ENCODE measurements at regions of chr9 and their contacts with region 1.

Region 1: DNA sequence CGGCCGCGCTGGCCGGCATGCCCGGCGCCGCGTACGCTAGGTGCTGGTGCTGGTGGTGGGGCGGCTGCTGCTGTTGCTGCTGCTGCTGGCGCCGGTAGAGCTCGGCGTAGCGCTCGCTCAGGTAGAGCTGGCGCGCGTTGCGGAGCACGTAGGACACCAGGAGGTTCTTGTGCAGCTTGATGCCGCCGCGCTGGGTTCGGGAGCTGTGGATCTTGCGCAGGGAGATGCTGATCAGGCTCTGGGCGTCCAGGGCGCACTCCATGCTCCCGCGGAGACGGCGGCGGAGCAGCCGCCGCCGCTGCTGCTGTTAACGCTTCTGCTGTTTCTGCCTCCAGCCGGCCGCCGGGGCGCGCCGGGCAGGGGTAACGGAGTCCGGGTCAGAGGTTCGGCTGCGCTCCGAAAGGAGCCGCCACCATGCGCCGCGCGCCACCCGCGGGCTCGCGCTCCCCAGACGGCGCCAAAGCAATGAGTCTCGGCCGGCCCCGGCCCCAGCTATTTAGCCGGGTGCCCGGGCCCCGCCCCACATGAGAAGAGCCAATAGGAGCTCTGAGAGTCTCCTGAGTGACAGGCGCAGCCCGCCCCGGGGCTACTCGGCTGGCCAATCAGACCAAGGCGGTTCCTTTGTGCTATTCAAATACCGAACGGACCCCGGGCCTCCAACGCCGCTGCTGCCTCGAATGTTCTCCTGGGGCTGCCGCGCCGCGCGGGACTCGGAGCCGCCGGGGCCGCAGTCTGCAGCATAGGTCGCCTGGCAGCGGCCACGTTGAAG is at the start of gene IER5L:
- DNase-seq: no peak
- ATAC-seq: peak; percentile 91
- H3K4me3 ChIP-seq: peak within 1 kb of the TSS; percentile 81
- H3K27ac ChIP-seq: no peak within 1 kb of the TSS
- H3K4me1 ChIP-seq: peaks cover 21% of the 10 kb centered on the region
- H3K27me3 ChIP-seq: peaks cover 0 to 3% of the 10 kb centered on the region in 2 experiments; a peak in 2 of 4 replicates
- CTCF ChIP-seq: no peak
- EP300 ChIP-seq: no peak
- POLR2A ChIP-seq: peak; percentile 96
- RAD21 ChIP-seq: no peak
- polyA plus RNA-seq, gene IER5L: 0.08 to 0.13 TPM

Region 2: DNA sequence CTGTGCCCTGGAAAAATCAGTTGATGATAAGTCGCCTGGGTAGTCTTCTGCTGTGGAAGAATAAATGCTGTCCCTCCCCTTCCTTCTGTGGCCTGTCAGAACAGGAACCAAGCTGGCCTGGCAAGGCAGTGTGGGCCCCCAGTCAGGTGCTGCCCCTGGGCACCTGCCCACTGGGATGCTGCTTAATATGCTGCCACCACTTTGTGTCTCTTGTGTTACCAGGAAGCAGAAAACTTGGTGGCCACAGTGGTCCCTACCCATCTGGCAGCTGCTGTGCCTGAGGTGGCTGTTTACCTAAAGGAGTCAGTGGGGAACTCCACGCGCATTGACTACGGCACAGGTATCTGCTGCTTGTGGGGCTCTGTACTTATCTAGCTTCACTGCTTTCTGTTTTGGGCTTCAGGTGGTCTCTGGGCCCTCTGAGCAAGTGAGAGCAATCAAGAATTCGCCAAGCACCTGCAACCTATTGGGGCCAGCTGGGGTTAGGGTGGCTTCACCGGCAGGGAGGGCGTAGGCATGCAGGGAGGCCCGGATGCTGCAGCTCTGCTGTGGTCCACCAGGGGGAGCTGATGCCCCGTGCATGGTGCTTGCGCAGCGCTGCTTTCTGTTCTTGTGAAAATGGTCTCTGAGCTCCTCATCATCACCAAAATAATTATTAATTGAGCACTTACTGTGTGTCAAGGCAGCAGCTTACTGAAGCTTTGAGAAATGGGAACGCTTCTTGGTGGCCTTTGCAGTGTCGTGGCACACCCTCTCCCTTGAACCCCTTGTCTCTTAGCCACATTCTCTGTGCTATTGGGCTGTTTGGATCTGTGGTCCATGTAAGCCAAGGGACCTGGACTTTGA is 46.5 kb before region 1 on chr9:
- CTCF ChIA-PET with region 1: interaction called, 70 read pairs
- POLR2A ChIA-PET with region 1: no interaction called
- RAD21 ChIA-PET with region 1: interaction called, 14 read pairs
- SMC1A ChIA-PET with region 1: interaction called, 6 read pairs
- in situ Hi-C with region 1: no loop called
- intact Hi-C with region 1: no loop called
- DNase-seq: no peak
- ATAC-seq: peak; percentile 100
- H3K4me3 ChIP-seq: no peak overlapping the region
- H3K27ac ChIP-seq: no peak overlapping the region; the same call in 1 of the 2 replicates
- H3K4me1 ChIP-seq: no peaks in the 10 kb centered on the region
- H3K27me3 ChIP-seq: no peaks in the 10 kb centered on the region
- CTCF ChIP-seq: peak; percentile 98 to 99 (median 98); a peak in 5 of 6 replicates
- EP300 ChIP-seq: no peak
- POLR2A ChIP-seq: no peak
- RAD21 ChIP-seq: peak; percentile 83

Region 3: GRCh38 chr9:129166623-129167557 is 11.1 kb before region 1 on chr9:
- CTCF ChIA-PET with region 1: interaction called, 11 read pairs
- POLR2A ChIA-PET with region 1: no interaction called
- RAD21 ChIA-PET with region 1: interaction called, 3 read pairs
- SMC1A ChIA-PET with region 1: interaction called, 4 read pairs
- in situ Hi-C with region 1: no loop called
- intact Hi-C with region 1: no loop called
- DNase-seq: no peak
- ATAC-seq: peak; percentile 38
- H3K4me3 ChIP-seq: no peak overlapping the region
- H3K27ac ChIP-seq: no peak overlapping the region
- H3K4me1 ChIP-seq: peaks cover 6% of the 10 kb centered on the region; the same call in 1 of the 2 replicates
- H3K27me3 ChIP-seq: no peaks in the 10 kb centered on the region
- CTCF ChIP-seq: no peak
- EP300 ChIP-seq: no peak
- POLR2A ChIP-seq: no peak
- RAD21 ChIP-seq: no peak

Region 4: GRCh38 chr9:129270903-129271431 is 93.0 kb after region 1 on chr9:
- CTCF ChIA-PET with region 1: interaction called, 9 read pairs
- POLR2A ChIA-PET with region 1: interaction called, 3 read pairs
- RAD21 ChIA-PET with region 1: no interaction called
- SMC1A ChIA-PET with region 1: no interaction called
- in situ Hi-C with region 1: no loop called
- intact Hi-C with region 1: loop called (anchors 2 kb)
- DNase-seq: peak; percentile 76
- ATAC-seq: peak; percentile 83
- H3K4me3 ChIP-seq: peak overlapping the region; percentile 18
- H3K27ac ChIP-seq: peak overlapping the region; percentile 75
- H3K4me1 ChIP-seq: peaks cover 30% of the 10 kb centered on the region
- H3K27me3 ChIP-seq: peaks cover 0 to 2% of the 10 kb centered on the region in 2 experiments; a peak in 1 of 4 replicates
- CTCF ChIP-seq: no peak
- EP300 ChIP-seq: peak in 1 of 2 experiments; percentile 40; a peak in 1 of 4 replicates
- POLR2A ChIP-seq: no peak
- RAD21 ChIP-seq: 0 out of 2 replicates have a peak, but pooled peaks have one; percentile 7

Region 5: GRCh38 chr9:129495534-129496325 is 317.8 kb after region 1 on chr9:
- CTCF ChIA-PET with region 1: interaction called, 3 read pairs
- POLR2A ChIA-PET with region 1: no interaction called
- RAD21 ChIA-PET with region 1: interaction called, 4 read pairs
- SMC1A ChIA-PET with region 1: no interaction called
- in situ Hi-C with region 1: no loop called
- intact Hi-C with region 1: loop called (anchors 10 kb)
- DNase-seq: no peak
- ATAC-seq: peak; percentile 80
- H3K4me3 ChIP-seq: peak overlapping the region; percentile 41; the same call in 1 of the 2 replicates
- H3K27ac ChIP-seq: no peak overlapping the region
- H3K4me1 ChIP-seq: peaks cover 9% of the 10 kb centered on the region
- H3K27me3 ChIP-seq: peaks cover 4 to 9% of the 10 kb centered on the region in 2 experiments
- CTCF ChIP-seq: no peak
- EP300 ChIP-seq: no peak
- POLR2A ChIP-seq: no peak
- RAD21 ChIP-seq: no peak

Region 6: GRCh38 chr9:129602598-129603415 is 424.8 kb after region 1 on chr9:
- CTCF ChIA-PET with region 1: interaction called, 34 read pairs
- POLR2A ChIA-PET with region 1: interaction called, 3 read pairs
- RAD21 ChIA-PET with region 1: interaction called, 22 read pairs
- SMC1A ChIA-PET with region 1: interaction called, 6 read pairs
- in situ Hi-C with region 1: no loop called
- intact Hi-C with region 1: no loop called
- DNase-seq: no peak
- ATAC-seq: peak; percentile 77
- H3K4me3 ChIP-seq: no peak overlapping the region
- H3K27ac ChIP-seq: no peak overlapping the region
- H3K4me1 ChIP-seq: peaks cover 12% of the 10 kb centered on the region
- H3K27me3 ChIP-seq: no peaks in the 10 kb centered on the region
- CTCF ChIP-seq: no peak
- EP300 ChIP-seq: 0 out of 4 replicates have a peak, but pooled peaks of 1 of the 2 experiments have one; percentile 19
- POLR2A ChIP-seq: no peak
- RAD21 ChIP-seq: no peak

Region 7: DNA sequence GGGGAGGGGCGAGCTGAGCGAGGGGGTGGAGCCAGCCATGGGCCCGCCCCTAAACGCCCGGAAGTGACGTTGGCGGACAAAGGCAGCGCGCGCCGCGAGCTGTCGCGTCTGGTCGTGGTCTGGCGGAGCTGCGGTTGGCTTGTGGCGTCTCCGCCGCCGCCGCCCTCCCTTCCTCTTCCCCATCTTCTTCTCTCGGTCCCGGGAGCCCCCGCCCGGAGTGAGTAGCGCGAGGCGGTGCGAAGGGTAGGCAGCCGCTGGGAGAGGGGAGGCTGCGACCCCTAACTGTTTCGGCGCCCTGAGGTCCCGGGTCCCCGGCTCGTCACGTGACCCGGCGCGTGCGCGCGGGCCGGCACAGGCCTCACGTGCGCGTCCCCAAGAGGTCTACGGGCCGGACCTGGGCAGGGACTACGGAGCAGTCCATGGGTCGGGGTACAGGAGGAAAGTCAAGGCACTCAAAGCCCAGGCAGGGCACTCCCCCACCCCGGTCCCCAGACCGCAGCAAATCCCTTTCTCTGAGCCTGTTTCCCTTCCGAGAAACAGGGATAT is 448.2 kb after region 1 on chr9 and contains the start of gene NTMT1:
- CTCF ChIA-PET with region 1: interaction called, 54 read pairs
- POLR2A ChIA-PET with region 1: interaction called, 3 read pairs
- RAD21 ChIA-PET with region 1: interaction called, 26 read pairs
- SMC1A ChIA-PET with region 1: interaction called, 25 read pairs
- in situ Hi-C with region 1: no loop called
- intact Hi-C with region 1: no loop called
- DNase-seq: peak; percentile 39
- ATAC-seq: peak; percentile 80
- H3K4me3 ChIP-seq: peak within 1 kb of the TSS; percentile 93
- H3K27ac ChIP-seq: peak within 1 kb of the TSS; percentile 90
- H3K4me1 ChIP-seq: peaks cover 18% of the 10 kb centered on the region
- H3K27me3 ChIP-seq: peaks cover 0 to 2% of the 10 kb centered on the region in 2 experiments; a peak in 2 of 4 replicates
- CTCF ChIP-seq: no peak
- EP300 ChIP-seq: no peak; a peak in 1 of 4 replicates
- POLR2A ChIP-seq: peak; percentile 98
- RAD21 ChIP-seq: no peak
- polyA plus RNA-seq, gene NTMT1: 12.8 to 18.3 TPM